ENCODE measurements at regions of chr19 and their contacts with region 1.

Region 1: GRCh38 chr19:11570039-11570462 is 7.4 kb downstream of the ACP5 start:
- DNase-seq: no peak
- ATAC-seq: no peak
- H3K4me3 Mint-ChIP-seq: no peak overlapping the region
- H3K27ac Mint-ChIP-seq: no peak overlapping the region
- H3K4me1 Mint-ChIP-seq: peaks cover 68% of the 10 kb centered on the region
- H3K27me3 Mint-ChIP-seq: no peaks in the 10 kb centered on the region
- CTCF ChIP-seq: no peak

Region 2: GRCh38 chr19:11528551-11529341 is 41.3 kb before region 1 on chr19 and contains the start of gene ECSIT:
- CTCF ChIA-PET with region 1: no interaction called
- POLR2A ChIA-PET with region 1: interaction called, 14 read pairs
- intact Hi-C with region 1: no loop called
- DNase-seq: peak; percentile 81
- ATAC-seq: peak; percentile 99
- H3K4me3 Mint-ChIP-seq: peak within 1 kb of the TSS; percentile 93
- H3K27ac Mint-ChIP-seq: peak within 1 kb of the TSS; percentile 89
- H3K4me1 Mint-ChIP-seq: peaks cover 13% of the 10 kb centered on the region
- H3K27me3 Mint-ChIP-seq: no peaks in the 10 kb centered on the region
- CTCF ChIP-seq: no peak
- total RNA-seq, gene ECSIT: 49.3 and 54.2 TPM in 2 replicates

Region 3: DNA sequence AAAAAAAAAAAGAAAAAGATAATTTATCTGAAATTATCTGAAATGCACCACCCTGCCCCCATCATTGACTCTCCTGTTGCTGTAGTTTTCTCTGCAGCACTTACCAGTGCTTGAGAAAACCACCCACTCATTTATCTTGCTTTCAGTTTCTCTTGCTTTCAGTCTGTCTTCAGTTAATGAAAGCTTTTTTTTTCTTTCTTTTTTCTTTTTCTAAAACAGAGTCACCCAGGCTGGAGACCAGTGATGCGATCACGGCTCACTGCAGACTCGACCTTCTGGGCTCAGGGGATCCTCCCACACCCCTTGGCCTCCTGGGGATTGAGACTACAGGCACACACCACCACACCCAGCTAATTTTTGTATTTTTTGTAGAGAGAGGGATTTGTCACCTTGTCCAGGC is 11.7 kb after region 1 on chr19:
- CTCF ChIA-PET with region 1: interaction called, 15 read pairs
- POLR2A ChIA-PET with region 1: interaction called, 314 read pairs
- intact Hi-C with region 1: loop called (anchors 1 kb)
- DNase-seq: peak; percentile 72
- ATAC-seq: peak; percentile 88
- H3K4me3 Mint-ChIP-seq: peak overlapping the region; percentile 73
- H3K27ac Mint-ChIP-seq: peak overlapping the region; percentile 81
- H3K4me1 Mint-ChIP-seq: peaks cover 86% of the 10 kb centered on the region
- H3K27me3 Mint-ChIP-seq: no peaks in the 10 kb centered on the region
- CTCF ChIP-seq: no peak

Region 4: GRCh38 chr19:11612816-11613511 is 42.9 kb after region 1 on chr19:
- CTCF ChIA-PET with region 1: no interaction called
- POLR2A ChIA-PET with region 1: no interaction called
- intact Hi-C with region 1: no loop called
- DNase-seq: no peak
- ATAC-seq: no peak
- H3K4me3 Mint-ChIP-seq: no peak overlapping the region
- H3K27ac Mint-ChIP-seq: no peak overlapping the region
- H3K4me1 Mint-ChIP-seq: peaks cover 2% of the 10 kb centered on the region
- H3K27me3 Mint-ChIP-seq: no peaks in the 10 kb centered on the region
- CTCF ChIP-seq: no peak

Measured in activated B cell treated with CpG ODN at 0.5 μM for 24 hours (primary cell).